PC-9 (cell line): ENCODE measurements at regions of chr17 and their contacts with region 1.

Region 1: DNA sequence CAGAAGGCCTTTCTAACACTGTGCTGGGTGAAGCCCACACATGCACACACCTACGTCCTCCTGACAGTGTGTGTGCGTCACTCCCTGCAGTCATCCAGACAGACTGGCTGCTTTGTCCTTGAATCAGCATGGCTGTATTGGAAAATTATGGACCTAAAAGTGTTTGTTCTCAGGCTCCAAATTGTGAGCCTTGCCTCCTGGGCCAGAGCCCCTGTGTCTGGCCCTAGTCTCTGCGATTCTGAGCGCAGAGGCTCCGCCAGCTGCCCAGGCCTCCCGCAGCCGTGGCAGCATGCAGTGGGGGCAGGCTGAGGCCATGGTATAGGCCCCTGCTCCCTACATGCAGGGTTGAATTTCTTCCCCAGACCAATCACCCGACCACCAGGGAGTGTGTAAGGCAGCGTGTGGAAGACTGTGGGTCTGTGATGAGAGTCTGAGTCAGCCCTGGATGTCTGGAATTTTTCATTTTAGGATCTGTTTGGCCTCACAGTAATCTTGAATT is 166.9 kb downstream of the LGALS9B start:
- DNase-seq: no peak
- H3K4me3 ChIP-seq: no peak overlapping the region
- H3K27ac ChIP-seq: no peak overlapping the region
- H3K4me1 ChIP-seq: no peaks in the 10 kb centered on the region
- H3K27me3 ChIP-seq: no peaks in the 10 kb centered on the region
- CTCF ChIP-seq: no peak

Region 2: GRCh38 chr17:19857640-19858039 is 442.8 kb before region 1 on chr17:
- CTCF ChIA-PET with region 1: no interaction called
- POLR2A ChIA-PET with region 1: interaction called, 42 read pairs
- intact Hi-C with region 1: no loop called
- DNase-seq: no peak
- H3K4me3 ChIP-seq: no peak overlapping the region
- H3K27ac ChIP-seq: no peak overlapping the region
- H3K4me1 ChIP-seq: no peaks in the 10 kb centered on the region
- H3K27me3 ChIP-seq: no peaks in the 10 kb centered on the region
- CTCF ChIP-seq: no peak

Region 3: DNA sequence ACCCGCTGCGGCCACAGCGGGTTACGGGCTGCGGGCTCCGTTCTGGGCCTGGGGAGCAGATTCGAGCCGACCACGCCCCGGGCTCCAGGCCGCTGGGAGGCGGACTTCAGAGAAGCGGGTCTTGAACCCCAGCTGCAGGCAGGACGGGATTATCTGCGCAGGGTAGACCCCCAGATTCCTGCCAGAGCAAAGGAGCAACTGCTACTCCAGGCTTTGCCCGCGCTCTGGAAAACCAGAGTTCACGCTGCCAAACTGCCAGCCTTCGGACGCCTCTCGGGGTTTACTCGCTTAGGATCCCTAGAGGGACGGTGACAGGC is 432.4 kb before region 1 on chr17:
- CTCF ChIA-PET with region 1: no interaction called
- POLR2A ChIA-PET with region 1: no interaction called
- intact Hi-C with region 1: no loop called
- DNase-seq: no peak
- H3K4me3 ChIP-seq: no peak overlapping the region; the same call in 1 of the 2 replicates
- H3K27ac ChIP-seq: no peak overlapping the region
- H3K4me1 ChIP-seq: peaks cover 9% of the 10 kb centered on the region; the same call in 1 of the 2 replicates
- H3K27me3 ChIP-seq: no peaks in the 10 kb centered on the region
- CTCF ChIP-seq: no peak